PC-9 (cell line): ENCODE measurements at regions of chr6 and their contacts with region 1.

Region 1: GRCh38 chr6:10446565-10446964 is 31.7 kb upstream of the TFAP2A start:
- DNase-seq: no peak
- H3K4me3 ChIP-seq: no peak overlapping the region
- H3K27ac ChIP-seq: no peak overlapping the region
- H3K4me1 ChIP-seq: peaks cover 22% of the 10 kb centered on the region
- H3K27me3 ChIP-seq: no peaks in the 10 kb centered on the region
- CTCF ChIP-seq: no peak

Region 2: GRCh38 chr6:9370480-9370879 is 1076.1 kb before region 1 on chr6:
- CTCF ChIA-PET with region 1: interaction called, 19 read pairs
- POLR2A ChIA-PET with region 1: no interaction called
- intact Hi-C with region 1: no loop called
- DNase-seq: no peak
- H3K4me3 ChIP-seq: no peak overlapping the region
- H3K27ac ChIP-seq: no peak overlapping the region
- H3K4me1 ChIP-seq: no peaks in the 10 kb centered on the region
- H3K27me3 ChIP-seq: no peaks in the 10 kb centered on the region
- CTCF ChIP-seq: no peak

Region 3: DNA sequence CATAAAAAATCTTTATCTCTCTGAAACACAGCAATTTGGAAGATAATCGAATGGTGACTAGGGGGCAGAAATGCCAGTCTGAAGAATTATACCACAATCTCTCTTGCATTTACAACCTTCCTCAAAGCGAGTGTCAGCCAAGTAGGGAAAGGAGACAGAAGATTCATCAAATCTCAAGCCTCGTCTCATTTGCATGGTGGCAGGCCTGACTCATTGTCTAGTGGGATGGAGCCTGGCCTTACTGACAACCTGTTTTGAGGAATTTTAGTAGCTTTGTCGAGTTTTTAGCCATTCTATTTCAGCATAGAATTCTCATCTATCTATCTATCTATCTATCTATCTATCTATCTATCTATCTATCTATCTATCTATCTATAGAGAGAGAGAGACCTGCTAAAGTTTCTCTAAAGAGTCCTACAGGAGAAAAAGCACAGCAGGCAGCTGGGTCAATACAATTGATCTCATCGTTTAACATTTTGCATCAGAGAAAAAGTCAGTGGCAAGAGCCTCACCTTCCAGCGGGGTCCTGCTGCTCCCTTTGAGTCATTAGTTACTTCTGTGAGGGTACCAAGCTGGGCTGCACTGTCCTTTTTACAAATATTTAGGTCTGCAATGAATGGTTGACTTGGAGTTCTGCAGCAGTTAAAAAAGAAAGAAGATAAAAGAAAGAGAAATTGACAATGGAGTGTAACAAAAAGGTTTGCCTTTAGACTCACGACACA is 604.4 kb before region 1 on chr6:
- CTCF ChIA-PET with region 1: no interaction called
- POLR2A ChIA-PET with region 1: no interaction called
- intact Hi-C with region 1: no loop called
- DNase-seq: no peak
- H3K4me3 ChIP-seq: no peak overlapping the region
- H3K27ac ChIP-seq: no peak overlapping the region
- H3K4me1 ChIP-seq: no peaks in the 10 kb centered on the region
- H3K27me3 ChIP-seq: no peaks in the 10 kb centered on the region
- CTCF ChIP-seq: no peak

Region 4: DNA sequence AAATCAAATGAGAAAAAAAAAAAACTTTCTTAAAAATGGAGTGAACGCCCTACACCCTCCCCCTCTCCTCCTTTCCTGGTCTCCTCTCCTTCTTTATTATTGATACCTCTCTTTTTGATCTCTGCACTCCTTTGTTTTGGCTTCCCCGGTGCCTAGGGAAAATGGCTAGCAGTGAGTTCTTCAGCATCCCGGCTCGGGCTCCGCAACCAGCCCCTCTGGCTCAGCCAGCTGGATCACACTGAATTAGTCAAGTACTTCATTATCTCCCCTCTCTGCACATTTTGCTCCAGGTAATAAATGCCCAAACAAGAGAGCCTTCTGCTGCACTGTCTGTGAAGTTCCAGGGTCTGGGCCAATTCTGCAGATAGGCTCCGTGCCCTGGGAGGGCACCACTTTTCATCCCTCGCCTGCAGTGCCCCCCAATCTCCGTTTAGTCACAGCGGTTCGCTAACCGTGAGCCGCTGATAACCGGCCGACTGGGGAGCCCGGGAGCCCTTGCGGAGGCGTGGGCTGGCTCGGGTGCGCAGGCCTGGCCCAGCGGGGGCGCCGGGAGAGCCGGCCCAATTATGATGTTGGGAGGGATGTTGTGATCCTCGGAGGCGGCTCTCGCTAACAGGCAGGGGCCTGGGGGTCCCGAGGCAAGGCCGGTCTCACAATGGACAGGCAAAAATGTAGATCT is 333.6 kb before region 1 on chr6:
- CTCF ChIA-PET with region 1: no interaction called
- POLR2A ChIA-PET with region 1: interaction called, 10 read pairs
- intact Hi-C with region 1: no loop called
- DNase-seq: no peak
- H3K4me3 ChIP-seq: no peak overlapping the region
- H3K27ac ChIP-seq: no peak overlapping the region
- H3K4me1 ChIP-seq: no peaks in the 10 kb centered on the region
- H3K27me3 ChIP-seq: no peaks in the 10 kb centered on the region
- CTCF ChIP-seq: no peak